Left ventricle myocardium inferior (tissue), 1 donor: ENCODE measurements at regions of chr21 and their contacts with region 1.

Region 1: GRCh38 chr21:18178509-18178908 is 66.1 kb upstream of the CHODL start:
- DNase-seq: no peak
- H3K4me3 ChIP-seq: no peak overlapping the region
- H3K27ac ChIP-seq: no peak overlapping the region
- H3K4me1 ChIP-seq: no peaks in the 10 kb centered on the region
- H3K27me3 ChIP-seq: no peaks in the 10 kb centered on the region
- CTCF ChIP-seq: no peak

Region 2: DNA sequence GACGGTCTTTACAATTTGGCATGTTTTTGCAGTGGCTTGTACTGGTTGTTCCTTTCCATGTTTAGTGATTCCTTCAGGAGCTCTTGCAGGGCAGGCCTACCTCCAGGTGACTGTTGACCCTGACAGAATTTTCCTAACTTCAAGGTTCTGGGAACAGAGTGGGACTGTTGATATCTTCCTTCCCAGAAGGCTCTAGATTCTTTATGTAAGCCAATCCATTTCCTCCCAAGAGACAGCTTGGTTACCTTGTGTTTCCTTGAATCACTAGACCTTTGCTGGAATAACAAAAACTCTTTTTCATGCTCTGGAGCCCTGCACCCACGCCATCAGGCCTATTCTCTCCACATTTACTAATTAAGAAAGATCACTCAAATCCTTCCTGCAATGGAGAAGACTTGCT is 426.3 kb before region 1 on chr21:
- intact Hi-C with region 1: no loop called
- DNase-seq: no peak
- H3K4me3 ChIP-seq: no peak overlapping the region
- H3K27ac ChIP-seq: no peak overlapping the region
- H3K4me1 ChIP-seq: no peaks in the 10 kb centered on the region
- H3K27me3 ChIP-seq: no peaks in the 10 kb centered on the region
- CTCF ChIP-seq: no peak

Region 3: GRCh38 chr21:17768840-17769446 is 409.6 kb before region 1 on chr21:
- intact Hi-C with region 1: no loop called
- DNase-seq: no peak
- H3K4me3 ChIP-seq: no peak overlapping the region
- H3K27ac ChIP-seq: no peak overlapping the region
- H3K4me1 ChIP-seq: no peaks in the 10 kb centered on the region
- H3K27me3 ChIP-seq: no peaks in the 10 kb centered on the region
- CTCF ChIP-seq: no peak

Region 4: GRCh38 chr21:18161841-18162240 is 16.7 kb before region 1 on chr21:
- intact Hi-C with region 1: loop called (anchors 2 kb)
- DNase-seq: no peak
- H3K4me3 ChIP-seq: no peak overlapping the region
- H3K27ac ChIP-seq: no peak overlapping the region
- H3K4me1 ChIP-seq: no peaks in the 10 kb centered on the region
- H3K27me3 ChIP-seq: no peaks in the 10 kb centered on the region
- CTCF ChIP-seq: no peak